ENCODE measurements at regions of chr21 and their contacts with region 1.

Region 1: GRCh38 chr21:32562426-32562825 is 22.9 kb downstream of the TCP10L start:
- DNase-seq: no peak
- ATAC-seq: peak; percentile 63

Region 2: DNA sequence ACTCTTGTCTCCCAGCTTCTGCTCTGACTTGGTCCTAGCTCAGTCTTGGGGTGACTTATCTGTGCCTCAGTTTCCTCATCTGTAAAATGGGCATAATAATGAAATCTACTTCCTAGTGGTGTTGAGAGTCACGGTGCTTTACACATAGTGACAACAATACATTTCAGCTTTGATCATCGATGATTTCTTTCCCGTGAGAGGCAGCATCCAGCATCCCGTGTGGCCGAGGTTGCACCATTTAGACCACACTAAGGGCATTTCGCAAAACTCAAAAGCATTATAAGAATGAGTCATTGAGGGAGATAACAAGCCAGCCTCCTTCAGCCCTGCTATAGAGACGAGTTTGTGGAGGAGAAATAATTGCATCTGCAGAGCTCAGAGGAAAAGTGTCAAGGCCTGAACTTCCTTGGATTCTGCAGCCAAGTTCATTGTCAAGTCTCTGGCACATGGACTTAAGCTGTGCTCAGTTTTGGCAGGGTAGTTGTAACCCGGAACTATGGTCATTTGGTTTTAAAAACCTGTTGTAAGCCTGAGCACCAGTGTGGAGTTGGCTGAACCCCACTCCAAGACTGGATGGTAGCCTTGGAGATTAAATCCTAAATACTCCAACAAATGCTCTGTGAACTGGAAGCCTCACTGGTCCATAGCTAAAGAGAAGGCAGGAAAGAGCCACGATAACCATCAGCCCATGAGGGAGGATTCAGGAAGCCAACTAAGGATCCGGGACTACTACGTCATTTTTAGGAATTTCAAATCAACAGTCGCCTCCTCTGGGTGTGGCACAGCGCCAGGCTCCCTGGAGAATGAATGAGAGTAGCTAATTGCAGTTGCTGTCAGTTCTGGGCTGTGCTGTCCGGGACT is 41.3 kb before region 1 on chr21:
- intact Hi-C with region 1: loop called (anchors 5 kb)
- DNase-seq: peak; percentile 94
- ATAC-seq: peak; percentile 78

Measured in Right ventricle myocardium inferior (tissue), 1 donor.